H1 (cell line): ENCODE measurements at regions of chr15 and their contacts with region 1.

Region 1: GRCh38 chr15:31488426-31489204 is 162.0 kb downstream of the KLF13 start:
- DNase-seq: peak; percentile 58 to 66
- H3K4me3 ChIP-seq: no peak overlapping the region
- H3K27ac ChIP-seq: no peak overlapping the region
- H3K4me1 ChIP-seq: peaks cover 0 to 6% (median under 1%) of the 10 kb centered on the region in 4 experiments; a peak in 5 of 7 replicates
- H3K27me3 ChIP-seq: peaks cover 14 to 16% (median 15%) of the 10 kb centered on the region in 4 experiments
- CTCF ChIP-seq: peak; percentile 56 to 99 (median 93)
- EP300 ChIP-seq: no peak; a peak in 1 of 3 replicates
- POLR2A ChIP-seq: no peak
- RAD21 ChIP-seq: peak; percentile 81 to 85

Region 2: GRCh38 chr15:31206386-31206785 is 282.2 kb before region 1 on chr15:
- CTCF ChIA-PET with region 1: interaction called, 52 read pairs
- POLR2A ChIA-PET with region 1: no interaction called
- DNase-seq: no peak
- H3K4me3 ChIP-seq: no peak overlapping the region
- H3K27ac ChIP-seq: no peak overlapping the region
- H3K4me1 ChIP-seq: no peaks in the 10 kb centered on the region
- H3K27me3 ChIP-seq: no peaks in the 10 kb centered on the region
- CTCF ChIP-seq: peak; percentile 16 to 37 (median 19)
- EP300 ChIP-seq: no peak
- POLR2A ChIP-seq: no peak
- RAD21 ChIP-seq: peak; percentile 49 to 57

Region 3: GRCh38 chr15:31228985-31229826 is 259.4 kb before region 1 on chr15:
- CTCF ChIA-PET with region 1: interaction called, 11 read pairs
- POLR2A ChIA-PET with region 1: no interaction called
- DNase-seq: no peak
- H3K4me3 ChIP-seq: no peak overlapping the region
- H3K27ac ChIP-seq: no peak overlapping the region
- H3K4me1 ChIP-seq: peaks cover 0 to 4% (median 0%) of the 10 kb centered on the region in 4 experiments; a peak in 1 of 7 replicates
- H3K27me3 ChIP-seq: no peaks in the 10 kb centered on the region
- CTCF ChIP-seq: no peak
- EP300 ChIP-seq: no peak
- POLR2A ChIP-seq: no peak
- RAD21 ChIP-seq: no peak

Region 4: GRCh38 chr15:31435261-31435911 is 53.2 kb before region 1 on chr15:
- CTCF ChIA-PET with region 1: interaction called, 199 read pairs
- POLR2A ChIA-PET with region 1: no interaction called
- DNase-seq: peak; percentile 73 to 76
- H3K4me3 ChIP-seq: no peak overlapping the region
- H3K27ac ChIP-seq: no peak overlapping the region
- H3K4me1 ChIP-seq: no peaks in the 10 kb centered on the region; a peak in 1 of 7 replicates
- H3K27me3 ChIP-seq: peaks cover 0 to 3% (median 2%) of the 10 kb centered on the region in 4 experiments; a peak in 5 of 7 replicates
- CTCF ChIP-seq: peak; percentile 87 to 99 (median 89)
- EP300 ChIP-seq: no peak
- POLR2A ChIP-seq: no peak
- RAD21 ChIP-seq: peak; percentile 82 to 86

Region 5: GRCh38 chr15:31465083-31465955 is 23.3 kb before region 1 on chr15:
- CTCF ChIA-PET with region 1: interaction called, 105 read pairs
- POLR2A ChIA-PET with region 1: no interaction called
- DNase-seq: no peak
- H3K4me3 ChIP-seq: no peak overlapping the region
- H3K27ac ChIP-seq: no peak overlapping the region
- H3K4me1 ChIP-seq: no peaks in the 10 kb centered on the region
- H3K27me3 ChIP-seq: no peaks in the 10 kb centered on the region; a peak in 1 of 7 replicates
- CTCF ChIP-seq: no peak
- EP300 ChIP-seq: no peak
- POLR2A ChIP-seq: no peak
- RAD21 ChIP-seq: no peak

Region 6: DNA sequence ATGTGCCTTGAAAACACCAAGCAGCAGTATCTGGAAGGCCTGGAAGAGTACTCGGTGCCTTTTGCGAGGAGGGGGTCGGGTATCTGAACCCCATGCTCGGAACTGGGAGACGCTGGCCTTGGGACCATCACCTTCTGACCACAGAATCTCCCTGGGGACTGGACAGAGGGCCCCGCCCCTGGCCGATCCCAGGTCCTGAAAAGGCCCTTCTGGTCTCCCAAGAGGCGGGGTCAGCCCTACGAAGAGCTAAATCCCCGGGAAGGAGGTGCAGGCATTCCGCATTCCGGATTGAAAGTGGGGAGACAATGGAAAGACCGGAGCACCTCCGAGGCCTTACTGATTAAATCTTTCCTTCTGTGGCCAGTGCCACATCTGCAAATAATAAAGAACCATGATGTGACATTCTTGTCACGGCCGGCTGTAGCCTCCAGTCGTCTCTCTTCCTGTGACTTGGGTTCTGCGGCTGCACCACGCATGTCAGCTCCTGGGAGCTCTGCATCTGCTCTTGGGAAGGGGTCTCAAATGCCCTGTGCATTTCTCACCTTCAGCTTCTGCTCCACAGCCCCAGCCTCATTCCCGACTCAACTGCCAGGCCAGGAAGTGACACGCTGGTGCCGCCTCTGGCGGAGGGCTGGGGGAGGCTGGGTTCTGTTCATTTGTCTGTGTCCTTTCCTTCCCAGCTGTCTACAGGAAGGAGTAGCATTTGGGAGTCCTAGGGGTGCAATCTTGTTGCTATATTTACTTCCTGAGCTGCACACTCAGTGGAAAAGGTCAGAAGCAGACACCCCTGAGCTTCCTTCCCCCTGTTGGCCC is 11.5 kb after region 1 on chr15:
- CTCF ChIA-PET with region 1: interaction called, 44 read pairs
- POLR2A ChIA-PET with region 1: no interaction called
- DNase-seq: peak in 1 of 2 experiments; percentile 43
- H3K4me3 ChIP-seq: no peak overlapping the region
- H3K27ac ChIP-seq: no peak overlapping the region
- H3K4me1 ChIP-seq: no peaks in the 10 kb centered on the region
- H3K27me3 ChIP-seq: no peaks in the 10 kb centered on the region
- CTCF ChIP-seq: no peak
- EP300 ChIP-seq: no peak
- POLR2A ChIP-seq: no peak
- RAD21 ChIP-seq: no peak

Region 7: GRCh38 chr15:31563421-31563820 is 74.8 kb after region 1 on chr15:
- CTCF ChIA-PET with region 1: no interaction called
- POLR2A ChIA-PET with region 1: no interaction called
- DNase-seq: no peak
- H3K4me3 ChIP-seq: no peak overlapping the region
- H3K27ac ChIP-seq: no peak overlapping the region
- H3K4me1 ChIP-seq: no peaks in the 10 kb centered on the region
- H3K27me3 ChIP-seq: no peaks in the 10 kb centered on the region
- CTCF ChIP-seq: no peak
- EP300 ChIP-seq: no peak
- POLR2A ChIP-seq: no peak
- RAD21 ChIP-seq: no peak

Region 8: GRCh38 chr15:31590609-31591008 is 102.0 kb after region 1 on chr15:
- CTCF ChIA-PET with region 1: no interaction called
- POLR2A ChIA-PET with region 1: no interaction called
- DNase-seq: no peak
- H3K4me3 ChIP-seq: no peak overlapping the region
- H3K27ac ChIP-seq: no peak overlapping the region
- H3K4me1 ChIP-seq: peaks cover 0 to 4% (median 2%) of the 10 kb centered on the region in 4 experiments; a peak in 2 of 7 replicates
- H3K27me3 ChIP-seq: no peaks in the 10 kb centered on the region
- CTCF ChIP-seq: no peak
- EP300 ChIP-seq: no peak
- POLR2A ChIP-seq: no peak
- RAD21 ChIP-seq: no peak